ENCODE measurements at regions of chr17 and their contacts with region 1.

Region 1: DNA sequence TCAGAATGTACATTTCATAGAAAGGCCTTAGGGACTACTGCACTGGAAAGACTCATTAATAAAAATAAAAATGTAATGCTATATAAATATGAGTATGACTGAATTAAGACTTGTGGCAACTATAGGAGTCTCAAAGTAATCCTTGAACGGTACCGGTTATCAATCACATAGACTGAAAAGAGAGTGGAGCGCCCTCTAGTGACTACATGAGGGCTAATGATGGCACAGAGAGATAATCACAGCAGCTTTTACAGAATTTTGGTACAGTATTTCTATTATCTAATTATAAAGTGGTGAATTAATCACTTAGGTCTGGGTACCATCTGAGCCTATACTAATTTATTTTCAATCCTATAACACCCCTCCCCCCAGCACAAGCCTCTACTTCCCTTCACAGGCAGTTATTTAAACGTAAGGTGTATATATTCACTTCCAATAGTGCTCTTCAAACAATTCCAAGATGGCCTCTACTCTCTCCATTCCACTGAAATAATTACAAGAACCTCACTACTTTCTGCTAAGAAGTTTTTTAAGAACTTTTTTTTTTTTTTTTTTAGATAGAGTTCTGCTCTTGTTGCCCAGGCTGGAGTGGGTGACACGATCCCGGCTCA is 40.7 kb upstream of the ANKFY1 start:
- DNase-seq: no peak
- ATAC-seq: peak; percentile 64 to 71
- H3K4me3 ChIP-seq: no peak overlapping the region
- H3K27ac ChIP-seq: no peak overlapping the region
- H3K4me1 ChIP-seq: peaks cover 2% of the 10 kb centered on the region
- H3K27me3 ChIP-seq: no peaks in the 10 kb centered on the region

Region 2: DNA sequence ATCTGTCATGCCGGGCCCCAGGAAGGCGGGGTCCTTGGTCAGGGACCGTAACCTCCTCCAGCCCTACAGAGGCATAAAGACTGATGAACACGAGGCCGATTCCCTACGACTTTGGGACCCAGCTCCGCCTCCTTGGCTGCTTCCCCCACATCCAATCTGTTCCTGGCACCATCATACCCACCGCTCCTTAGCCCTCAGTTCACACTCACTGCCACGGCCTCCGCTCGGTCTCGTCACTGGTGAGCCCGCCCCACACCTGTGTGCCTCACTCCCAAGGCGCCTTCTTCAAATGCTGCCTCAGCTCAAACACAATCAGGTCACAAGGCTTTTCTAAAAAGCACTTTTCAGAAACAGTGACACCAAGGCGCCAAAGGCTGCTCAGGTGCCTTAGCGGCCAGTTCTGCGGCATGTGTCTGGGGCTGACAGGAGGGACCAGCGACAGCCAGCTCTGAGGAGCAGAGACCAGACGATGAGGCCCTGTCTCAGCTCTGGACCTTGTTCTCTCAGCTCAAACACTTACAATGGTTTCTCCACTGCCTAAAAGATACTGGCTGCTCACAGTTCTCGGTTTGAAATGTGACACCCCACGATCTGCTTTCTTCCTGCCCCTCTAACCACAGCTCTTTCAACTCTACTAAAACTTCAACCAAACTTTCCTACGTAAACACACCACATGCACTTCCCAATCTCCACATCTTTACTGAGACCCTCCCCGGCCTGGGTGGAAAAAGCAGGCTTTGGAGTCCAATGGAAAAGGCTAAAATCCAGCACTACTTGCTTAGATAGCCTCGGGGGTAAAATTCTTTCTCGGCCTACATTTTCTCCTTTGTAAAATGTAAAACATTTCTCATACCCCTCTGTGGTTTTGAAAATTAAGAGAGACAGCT is 128.4 kb before region 1 on chr17:
- intact Hi-C with region 1: no loop called
- DNase-seq: peak in 1 of 3 donors; percentile 30
- ATAC-seq: no peak
- H3K4me3 ChIP-seq: no peak overlapping the region
- H3K27ac ChIP-seq: no peak overlapping the region
- H3K4me1 ChIP-seq: no peaks in the 10 kb centered on the region
- H3K27me3 ChIP-seq: no peaks in the 10 kb centered on the region

Region 3: GRCh38 chr17:4215882-4216570 is 88.5 kb before region 1 on chr17:
- intact Hi-C with region 1: loop called in 1 of 4 experiments (anchors 10 kb)
- DNase-seq: no peak
- ATAC-seq: no peak
- H3K4me3 ChIP-seq: no peak overlapping the region
- H3K27ac ChIP-seq: no peak overlapping the region
- H3K4me1 ChIP-seq: no peaks in the 10 kb centered on the region
- H3K27me3 ChIP-seq: no peaks in the 10 kb centered on the region

Region 4: DNA sequence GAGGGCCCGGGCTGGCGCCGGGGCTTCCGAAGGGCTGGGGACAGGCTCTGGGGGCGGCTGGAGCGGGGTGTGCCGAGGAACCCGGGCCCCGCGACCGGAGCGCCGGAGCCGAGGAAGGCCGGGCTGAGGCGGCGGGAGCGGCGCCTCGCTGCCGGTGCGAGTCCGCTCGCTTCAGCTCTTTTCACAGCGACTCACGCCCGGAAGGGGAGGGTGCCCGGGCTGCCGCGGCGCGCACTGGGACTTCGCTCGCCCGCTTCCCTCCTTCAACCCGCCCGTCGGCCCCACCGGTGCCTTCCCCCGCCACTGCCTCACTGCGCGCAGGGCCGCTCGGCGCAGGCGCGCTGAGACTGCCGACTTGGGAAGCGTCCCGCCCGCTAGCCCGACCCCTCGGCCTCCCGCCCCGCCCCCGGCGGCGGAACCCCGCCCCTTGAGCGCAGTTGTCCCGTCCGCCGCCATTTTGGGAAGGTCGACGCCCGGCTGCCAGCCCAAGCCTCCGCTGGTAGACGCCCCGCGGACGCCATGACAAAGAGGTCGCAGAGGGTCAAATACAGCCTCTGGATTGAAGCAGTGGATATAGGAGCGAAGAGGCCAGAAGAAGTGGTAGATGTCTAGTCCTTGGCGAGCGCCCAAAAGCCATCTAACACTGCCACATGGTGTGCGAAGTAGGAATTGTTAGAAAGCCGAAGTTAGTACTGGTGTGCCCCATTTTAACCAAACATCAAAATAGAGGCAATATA is 62.0 kb after region 1 on chr17 and contains the start of gene UBE2G1:
- intact Hi-C with region 1: loop called in 1 of 4 experiments (anchors 10 kb)
- DNase-seq: peak; percentile 98 to 100 (median 99)
- ATAC-seq: peak; percentile 95 to 96
- H3K4me3 ChIP-seq: peak within 1 kb of the TSS; percentile 98
- H3K27ac ChIP-seq: peak within 1 kb of the TSS; percentile 95
- H3K4me1 ChIP-seq: no peaks in the 10 kb centered on the region
- H3K27me3 ChIP-seq: no peaks in the 10 kb centered on the region
- total RNA-seq, gene UBE2G1: 50.0 to 55.1 (median 52.3) TPM

Region 5: DNA sequence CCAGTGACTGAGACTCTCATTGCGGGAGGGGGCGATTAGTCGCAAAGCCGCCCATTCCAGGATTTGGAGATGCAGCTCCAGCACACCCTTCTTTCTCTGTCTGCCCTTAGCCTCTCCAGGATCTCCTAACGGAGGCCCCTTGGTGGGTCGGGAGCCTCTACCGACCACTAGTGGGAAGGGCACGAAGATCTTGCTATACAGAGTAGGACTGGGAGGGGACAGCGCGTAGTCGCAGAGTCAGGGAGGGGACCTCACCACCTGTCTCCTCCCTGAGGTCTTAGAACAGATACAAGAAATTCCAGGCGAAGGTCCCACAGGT is 279.2 kb after region 1 on chr17:
- intact Hi-C with region 1: no loop called
- DNase-seq: peak in 2 of 3 donors; percentile 71 to 72
- ATAC-seq: peak; percentile 60 to 74
- H3K4me3 ChIP-seq: peak overlapping the region; percentile 46
- H3K27ac ChIP-seq: no peak overlapping the region
- H3K4me1 ChIP-seq: peaks cover 3% of the 10 kb centered on the region
- H3K27me3 ChIP-seq: no peaks in the 10 kb centered on the region